ENCODE measurements at regions of chr16 and their contacts with region 1.

Region 1: GRCh38 chr16:3961449-3961849 is 80.9 kb upstream of the CREBBP start:
- DNase-seq: no peak
- H3K4me3 Mint-ChIP-seq: no peak overlapping the region
- H3K27ac Mint-ChIP-seq: no peak overlapping the region
- H3K4me1 Mint-ChIP-seq: peaks cover 25% of the 10 kb centered on the region
- H3K27me3 Mint-ChIP-seq: peaks cover 9% of the 10 kb centered on the region

Region 2: DNA sequence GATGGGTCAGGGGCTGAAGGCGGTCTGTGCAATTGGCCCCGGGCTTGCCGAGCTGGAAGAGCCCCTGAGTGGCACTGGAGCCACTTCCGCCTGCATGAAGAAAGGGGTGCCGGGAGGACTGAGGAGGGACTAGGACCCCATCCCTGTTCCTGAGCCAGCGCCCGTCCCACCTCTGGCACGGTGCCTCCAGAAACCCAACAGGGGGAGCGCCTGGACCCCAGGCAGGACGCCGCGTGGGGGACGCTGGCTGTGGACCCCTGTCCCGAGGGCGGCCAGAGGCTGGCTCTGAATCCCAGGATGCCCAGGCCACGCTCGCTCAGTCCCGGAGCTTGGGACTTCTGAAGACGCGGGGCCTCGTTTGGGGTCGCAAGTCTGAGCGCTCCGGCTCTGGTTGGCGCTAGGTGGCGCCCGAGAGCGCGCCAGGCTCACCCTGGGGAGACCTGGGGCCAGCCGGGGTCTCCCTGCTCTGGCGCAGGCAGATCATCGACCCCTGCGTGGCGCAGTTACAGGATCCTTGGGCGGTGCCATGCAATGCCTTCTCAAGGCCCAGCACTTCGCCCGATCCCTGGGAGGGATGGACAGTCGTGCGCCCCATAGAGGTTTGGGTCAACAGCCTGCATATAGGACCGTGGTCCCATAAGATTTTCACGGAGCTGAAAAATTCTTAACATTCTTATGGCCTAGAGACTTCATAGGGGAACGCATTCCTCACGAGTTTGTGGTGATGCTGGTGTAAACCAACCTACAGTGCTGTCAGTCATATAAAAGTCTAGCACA is 22.4 kb before region 1 on chr16:
- intact Hi-C with region 1: no loop called
- DNase-seq: peak; percentile 41
- H3K4me3 Mint-ChIP-seq: no peak overlapping the region
- H3K27ac Mint-ChIP-seq: no peak overlapping the region
- H3K4me1 Mint-ChIP-seq: no peaks in the 10 kb centered on the region
- H3K27me3 Mint-ChIP-seq: peaks cover 2% of the 10 kb centered on the region

Region 3: GRCh38 chr16:3980253-3981111 is 19.0 kb after region 1 on chr16:
- intact Hi-C with region 1: no loop called
- DNase-seq: no peak
- H3K4me3 Mint-ChIP-seq: no peak overlapping the region
- H3K27ac Mint-ChIP-seq: no peak overlapping the region
- H3K4me1 Mint-ChIP-seq: peaks cover 4% of the 10 kb centered on the region
- H3K27me3 Mint-ChIP-seq: no peaks in the 10 kb centered on the region

Region 4: DNA sequence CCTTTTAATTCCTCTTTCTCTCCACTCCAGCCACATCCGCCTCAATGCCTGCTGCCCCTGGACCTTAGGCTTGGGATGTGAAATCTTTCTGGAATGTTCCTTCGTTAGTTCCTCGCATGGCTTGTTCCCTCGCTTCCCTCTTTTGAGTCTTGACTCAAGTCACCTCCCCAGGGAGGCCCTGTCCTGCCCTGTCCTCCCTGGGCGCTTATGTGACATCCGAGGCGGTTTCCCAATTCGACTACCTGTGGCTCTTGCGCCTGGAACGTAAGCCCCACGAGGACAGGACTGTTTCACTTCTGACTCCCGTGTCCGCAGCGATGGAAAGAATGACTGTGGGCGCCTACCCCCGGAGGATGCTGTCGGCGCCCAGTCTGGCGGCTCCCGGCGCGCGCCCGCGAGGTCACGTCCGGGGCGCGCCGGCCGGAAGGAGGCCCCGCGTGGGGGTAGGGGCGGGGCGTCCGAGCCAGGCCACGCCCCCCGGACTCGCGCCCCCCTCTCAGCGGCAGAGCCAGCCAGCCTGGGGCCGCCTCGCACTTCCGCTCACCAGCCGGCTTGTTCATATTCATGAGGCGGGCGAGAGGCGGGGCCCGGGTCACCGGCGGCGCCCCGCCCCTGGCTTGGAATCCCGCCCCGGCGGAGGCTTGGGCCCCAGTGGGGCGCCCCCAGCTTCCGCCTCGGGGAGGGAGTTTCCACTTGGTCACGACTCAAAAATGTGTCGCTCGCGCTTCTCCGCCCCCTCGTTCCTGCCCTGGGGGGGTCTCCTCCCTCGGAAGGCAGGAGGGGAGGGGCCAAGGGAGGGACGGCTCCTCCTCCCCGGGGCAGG is 346.0 kb after region 1 on chr16:
- intact Hi-C with region 1: loop called (anchors 5 kb)
- DNase-seq: peak; percentile 97
- H3K4me3 Mint-ChIP-seq: peak overlapping the region; percentile 96
- H3K27ac Mint-ChIP-seq: peak overlapping the region; percentile 96
- H3K4me1 Mint-ChIP-seq: peaks cover 22% of the 10 kb centered on the region
- H3K27me3 Mint-ChIP-seq: peaks cover 6% of the 10 kb centered on the region